GM12878 (cell line): ENCODE measurements at regions of chr19 and their contacts with region 1.

Region 1: GRCh38 chr19:42450314-42450934 is 7.7 kb upstream of the CXCL17 start:
- DNase-seq: peak; percentile 84
- ATAC-seq: peak; percentile 97
- H3K4me3 ChIP-seq: no peak overlapping the region
- H3K27ac ChIP-seq: no peak overlapping the region
- H3K4me1 ChIP-seq: 0 out of 2 replicates have a peak, but pooled peaks cover 3% of the 10 kb centered on the region
- H3K27me3 ChIP-seq: no peaks in the 10 kb centered on the region
- CTCF ChIP-seq: peak; percentile 78 to 97 (median 91); a peak in 5 of 6 replicates
- EP300 ChIP-seq: no peak
- POLR2A ChIP-seq: no peak
- RAD21 ChIP-seq: peak; percentile 100

Region 2: GRCh38 chr19:42433503-42434260 is 16.7 kb before region 1 on chr19:
- CTCF ChIA-PET with region 1: interaction called, 37 read pairs
- POLR2A ChIA-PET with region 1: interaction called, 3 read pairs
- RAD21 ChIA-PET with region 1: interaction called, 8 read pairs
- SMC1A ChIA-PET with region 1: interaction called, 12 read pairs
- in situ Hi-C with region 1: no loop called
- intact Hi-C with region 1: no loop called
- DNase-seq: no peak
- ATAC-seq: peak; percentile 97
- H3K4me3 ChIP-seq: no peak overlapping the region
- H3K27ac ChIP-seq: no peak overlapping the region
- H3K4me1 ChIP-seq: no peaks in the 10 kb centered on the region
- H3K27me3 ChIP-seq: no peaks in the 10 kb centered on the region
- CTCF ChIP-seq: peak; percentile 91 to 95 (median 93)
- EP300 ChIP-seq: no peak
- POLR2A ChIP-seq: no peak
- RAD21 ChIP-seq: peak; percentile 83

Region 3: GRCh38 chr19:42468273-42468796 is 17.9 kb after region 1 on chr19:
- CTCF ChIA-PET with region 1: interaction called, 47 read pairs
- POLR2A ChIA-PET with region 1: interaction called, 6 read pairs
- RAD21 ChIA-PET with region 1: interaction called, 50 read pairs
- SMC1A ChIA-PET with region 1: interaction called, 37 read pairs
- in situ Hi-C with region 1: no loop called
- intact Hi-C with region 1: no loop called
- DNase-seq: no peak
- ATAC-seq: no peak
- H3K4me3 ChIP-seq: no peak overlapping the region
- H3K27ac ChIP-seq: no peak overlapping the region
- H3K4me1 ChIP-seq: peaks cover 30% of the 10 kb centered on the region
- H3K27me3 ChIP-seq: no peaks in the 10 kb centered on the region
- CTCF ChIP-seq: no peak
- EP300 ChIP-seq: no peak
- POLR2A ChIP-seq: no peak
- RAD21 ChIP-seq: no peak

Region 4: DNA sequence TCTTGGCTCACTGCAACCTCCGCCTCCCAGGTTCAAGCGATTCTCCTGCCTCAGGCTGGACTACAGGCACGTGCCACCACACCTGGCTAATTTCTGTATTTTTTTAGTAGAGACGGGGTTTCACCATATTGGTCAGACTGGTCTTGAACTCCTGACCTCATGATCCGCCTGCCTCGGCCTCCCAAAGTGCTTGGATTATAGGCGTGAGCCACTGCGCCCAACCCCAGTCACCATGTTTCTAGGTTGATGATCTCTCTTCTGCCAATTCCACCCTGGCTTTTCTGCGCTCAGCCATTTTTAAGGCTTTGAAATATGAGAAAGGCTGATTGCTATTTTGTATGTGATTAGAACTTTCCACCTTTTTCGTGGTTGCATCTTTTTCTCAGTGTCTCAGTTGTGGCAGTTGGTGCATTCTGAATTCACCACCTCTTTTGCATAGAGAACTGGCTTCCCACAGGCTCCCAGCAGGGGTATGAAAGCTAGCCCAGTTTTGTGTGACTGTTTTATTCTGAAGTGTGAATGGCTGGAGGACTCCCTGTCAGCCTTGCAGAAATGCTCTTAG is 62.4 kb after region 1 on chr19:
- CTCF ChIA-PET with region 1: interaction called, 8 read pairs
- POLR2A ChIA-PET with region 1: no interaction called
- RAD21 ChIA-PET with region 1: interaction called, 17 read pairs
- SMC1A ChIA-PET with region 1: interaction called, 16 read pairs
- in situ Hi-C with region 1: no loop called
- intact Hi-C with region 1: no loop called
- DNase-seq: peak; percentile 71
- ATAC-seq: peak; percentile 96
- H3K4me3 ChIP-seq: no peak overlapping the region
- H3K27ac ChIP-seq: peak overlapping the region; percentile 71
- H3K4me1 ChIP-seq: peaks cover 52% of the 10 kb centered on the region
- H3K27me3 ChIP-seq: no peaks in the 10 kb centered on the region
- CTCF ChIP-seq: 0 out of 6 replicates have a peak, but pooled peaks of 1 of the 3 experiments have one; percentile 11
- EP300 ChIP-seq: peak; percentile 26 to 68
- POLR2A ChIP-seq: no peak
- RAD21 ChIP-seq: no peak

Region 5: DNA sequence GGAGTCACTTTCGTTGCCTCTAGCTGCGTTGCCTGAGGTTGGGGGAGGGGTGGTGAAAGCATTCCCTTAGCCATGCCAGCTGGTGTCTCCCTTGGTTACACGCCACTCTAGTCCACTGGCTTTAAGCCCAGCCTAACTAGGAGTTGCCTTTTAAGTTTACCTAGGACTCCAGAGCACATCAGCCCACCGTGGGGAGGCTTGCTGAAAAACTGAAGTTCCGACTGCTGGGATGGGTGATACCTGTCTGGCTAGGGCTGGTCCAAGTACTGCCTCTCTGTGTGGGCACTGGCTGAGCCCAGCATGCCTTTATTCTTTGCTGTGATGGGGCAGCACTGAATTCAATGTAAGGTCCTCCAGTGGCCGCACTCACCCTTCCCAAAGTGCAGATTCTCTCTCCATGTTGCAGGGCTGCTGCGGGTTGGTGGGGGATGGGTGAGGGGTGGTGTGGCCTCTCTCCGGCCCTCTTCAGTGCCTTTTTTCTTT is 89.7 kb after region 1 on chr19:
- CTCF ChIA-PET with region 1: interaction called, 8 read pairs
- POLR2A ChIA-PET with region 1: interaction called, 3 read pairs
- RAD21 ChIA-PET with region 1: interaction called, 3 read pairs
- SMC1A ChIA-PET with region 1: interaction called, 15 read pairs
- in situ Hi-C with region 1: no loop called
- intact Hi-C with region 1: no loop called
- DNase-seq: no peak
- ATAC-seq: no peak
- H3K4me3 ChIP-seq: no peak overlapping the region
- H3K27ac ChIP-seq: no peak overlapping the region
- H3K4me1 ChIP-seq: no peaks in the 10 kb centered on the region
- H3K27me3 ChIP-seq: no peaks in the 10 kb centered on the region
- CTCF ChIP-seq: no peak
- EP300 ChIP-seq: no peak
- POLR2A ChIP-seq: no peak
- RAD21 ChIP-seq: no peak

Region 6: GRCh38 chr19:42596391-42597072 is 146.1 kb after region 1 on chr19:
- CTCF ChIA-PET with region 1: interaction called, 12 read pairs
- POLR2A ChIA-PET with region 1: no interaction called
- RAD21 ChIA-PET with region 1: no interaction called
- SMC1A ChIA-PET with region 1: interaction called, 5 read pairs
- in situ Hi-C with region 1: no loop called
- intact Hi-C with region 1: loop called (anchors 1 kb)
- DNase-seq: no peak
- ATAC-seq: peak; percentile 83
- H3K4me3 ChIP-seq: no peak overlapping the region
- H3K27ac ChIP-seq: no peak overlapping the region
- H3K4me1 ChIP-seq: no peaks in the 10 kb centered on the region
- H3K27me3 ChIP-seq: peaks cover 0 to 4% of the 10 kb centered on the region in 2 experiments; a peak in 1 of 4 replicates
- CTCF ChIP-seq: peak; percentile 80 to 96 (median 91)
- EP300 ChIP-seq: no peak
- POLR2A ChIP-seq: no peak
- RAD21 ChIP-seq: peak; percentile 57